ENCODE measurements at regions of chr5 and their contacts with region 1.

Region 1: GRCh38 chr5:10353241-10354047 is at the start of gene MARCHF6:
- DNase-seq: no peak
- ATAC-seq: peak; percentile 95
- H3K4me3 ChIP-seq: peak within 1 kb of the TSS; percentile 79 to 94
- H3K27ac ChIP-seq: peak within 1 kb of the TSS; percentile 97
- H3K4me1 ChIP-seq: peaks cover 38% of the 10 kb centered on the region
- H3K27me3 ChIP-seq: no peaks in the 10 kb centered on the region
- CTCF ChIP-seq: no peak
- total RNA-seq, gene MARCHF6: 172 TPM

Region 2: GRCh38 chr5:10283927-10284635 is 69.4 kb before region 1 on chr5:
- CTCF ChIA-PET with region 1: interaction called, 10 read pairs
- POLR2A ChIA-PET with region 1: interaction called, 3 read pairs
- in situ Hi-C with region 1: no loop called
- intact Hi-C with region 1: loop called (anchors 5 kb)
- DNase-seq: no peak
- ATAC-seq: peak; percentile 99
- H3K4me3 ChIP-seq: no peak overlapping the region
- H3K27ac ChIP-seq: no peak overlapping the region
- H3K4me1 ChIP-seq: peaks cover 10% of the 10 kb centered on the region; the same call in 1 of the 2 replicates
- H3K27me3 ChIP-seq: no peaks in the 10 kb centered on the region
- CTCF ChIP-seq: peak; percentile 98

Region 3: DNA sequence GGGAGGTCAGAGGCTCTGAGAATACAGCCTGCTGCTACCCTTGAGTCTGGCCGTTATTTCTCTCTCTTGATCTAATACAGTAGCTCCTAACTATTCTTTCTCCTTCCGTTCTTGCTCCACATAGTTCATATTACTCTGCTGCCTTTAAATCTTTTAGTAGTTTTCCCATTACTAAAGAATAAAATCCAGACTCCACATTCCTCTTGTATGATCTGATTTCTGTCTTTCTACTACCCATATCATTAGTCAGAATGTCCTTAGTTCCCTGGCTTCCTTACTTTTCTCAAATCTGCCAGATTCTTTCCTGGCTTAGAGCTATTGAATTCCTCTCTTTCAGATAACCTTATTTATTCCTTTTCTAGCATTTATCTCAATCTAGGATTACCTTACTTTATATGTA is 40.0 kb after region 1 on chr5:
- CTCF ChIA-PET with region 1: no interaction called
- POLR2A ChIA-PET with region 1: interaction called, 15 read pairs
- in situ Hi-C with region 1: no loop called
- intact Hi-C with region 1: no loop called
- DNase-seq: no peak
- ATAC-seq: no peak
- H3K4me3 ChIP-seq: no peak overlapping the region
- H3K27ac ChIP-seq: no peak overlapping the region
- H3K4me1 ChIP-seq: no peaks in the 10 kb centered on the region
- H3K27me3 ChIP-seq: no peaks in the 10 kb centered on the region
- CTCF ChIP-seq: no peak

Measured in Panc1 (cell line).